Activated CD4-positive, alpha-beta T cell treated with anti-CD3 and anti-CD28 coated beads for 36 hours (primary cell): ENCODE measurements at regions of chr19 and their contacts with region 1.

Region 1: DNA sequence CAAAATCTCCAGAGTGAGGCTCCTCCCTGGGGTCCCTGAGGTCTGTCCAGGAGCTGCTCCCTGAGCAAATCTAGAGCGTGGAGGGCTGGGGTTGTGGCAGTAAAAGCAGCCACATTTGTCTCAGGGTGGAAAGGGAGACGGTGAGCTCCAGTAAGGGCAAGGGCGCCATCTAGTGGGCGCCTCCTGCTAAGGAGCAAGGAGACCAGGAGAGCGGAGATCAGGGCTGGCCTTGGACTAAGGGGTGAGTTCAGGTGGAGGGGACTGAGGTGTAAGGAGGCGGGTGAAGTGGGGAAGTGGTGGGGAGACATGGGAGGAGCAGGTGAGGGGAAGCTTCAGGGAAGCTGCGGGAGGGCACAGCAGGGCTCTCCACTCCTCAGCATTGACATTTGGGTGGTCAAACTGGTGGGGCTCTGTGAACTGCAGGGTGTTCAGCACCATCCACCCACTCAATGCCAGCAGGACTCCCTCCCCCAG is 5.3 kb upstream of the CEACAM21 start:
- DNase-seq: peak; percentile 92
- ATAC-seq: peak; percentile 97
- H3K4me3 Mint-ChIP-seq: no peak overlapping the region
- H3K27ac Mint-ChIP-seq: no peak overlapping the region
- H3K4me1 Mint-ChIP-seq: peaks cover 28% of the 10 kb centered on the region
- H3K27me3 Mint-ChIP-seq: no peaks in the 10 kb centered on the region

Region 2: DNA sequence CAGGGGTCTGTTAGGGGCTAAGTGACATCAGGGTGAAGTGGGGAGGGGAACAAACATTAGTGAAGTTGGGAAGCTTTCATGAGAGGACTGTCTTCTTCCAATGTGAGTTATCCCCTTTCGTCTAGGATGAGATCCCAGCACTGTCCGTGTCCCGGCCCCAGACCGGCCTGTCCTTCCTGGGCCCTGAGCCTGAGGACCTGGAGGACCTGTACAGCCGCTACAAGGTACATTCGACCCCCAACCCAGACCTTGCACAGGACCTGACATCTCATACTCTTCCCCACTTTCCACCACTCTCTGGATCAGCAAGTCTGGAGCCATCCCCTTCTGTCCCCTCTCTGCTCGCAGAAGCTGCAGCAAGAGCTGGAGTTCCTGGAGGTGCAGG is 1598.7 kb before region 1 on chr19:
- CTCF ChIA-PET with region 1: no interaction called
- POLR2A ChIA-PET with region 1: no interaction called
- intact Hi-C with region 1: no loop called
- DNase-seq: no peak
- ATAC-seq: no peak
- H3K4me3 Mint-ChIP-seq: peak overlapping the region; percentile 89
- H3K27ac Mint-ChIP-seq: peak overlapping the region; percentile 96
- H3K4me1 Mint-ChIP-seq: peaks cover 47% of the 10 kb centered on the region
- H3K27me3 Mint-ChIP-seq: no peaks in the 10 kb centered on the region

Region 3: DNA sequence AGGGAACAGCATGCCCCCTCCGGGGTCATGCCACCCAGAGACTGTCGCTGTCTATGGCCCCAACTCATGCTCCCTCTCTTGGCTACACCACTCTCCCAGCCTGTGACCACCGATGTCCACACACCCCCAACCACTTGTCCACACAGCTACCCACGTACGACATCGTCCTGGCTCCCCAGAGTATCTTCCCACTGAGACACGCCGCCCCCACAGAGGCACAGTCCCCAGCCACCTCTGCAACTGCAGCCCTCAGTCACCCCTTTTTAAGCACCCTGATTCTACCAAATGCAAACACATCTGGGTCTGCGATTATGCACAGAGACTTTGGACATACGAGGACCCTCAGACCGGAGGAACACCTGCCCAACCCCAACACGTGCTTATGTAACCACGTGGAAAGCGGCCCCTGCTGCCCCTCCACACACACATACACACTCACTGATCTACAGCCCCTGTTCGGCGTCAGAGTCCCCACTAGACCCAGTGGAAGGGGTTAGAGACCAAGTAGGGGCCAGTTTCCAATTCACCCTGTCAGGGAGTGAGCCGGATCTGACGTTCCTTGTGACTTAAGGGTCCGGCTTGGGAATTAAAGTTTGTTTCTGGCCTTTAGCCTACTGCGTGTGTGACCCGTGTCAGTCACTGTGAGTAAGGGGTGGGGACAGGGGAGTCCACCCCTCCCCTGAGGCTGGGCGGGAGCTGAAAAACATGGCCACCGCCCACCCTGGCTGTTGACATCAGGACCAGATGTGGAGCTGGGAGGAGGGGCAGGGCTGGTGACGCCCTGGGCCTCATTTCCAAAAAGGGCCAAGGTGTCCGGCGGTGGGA is 363.5 kb before region 1 on chr19:
- CTCF ChIA-PET with region 1: interaction called, 3 read pairs
- POLR2A ChIA-PET with region 1: no interaction called
- intact Hi-C with region 1: loop called in 1 of 2 experiments (anchors 1 kb)
- DNase-seq: no peak
- ATAC-seq: no peak
- H3K4me3 Mint-ChIP-seq: no peak overlapping the region
- H3K27ac Mint-ChIP-seq: no peak overlapping the region
- H3K4me1 Mint-ChIP-seq: peaks cover 2% of the 10 kb centered on the region
- H3K27me3 Mint-ChIP-seq: no peaks in the 10 kb centered on the region

Region 4: GRCh38 chr19:41515015-41515652 is 55.5 kb before region 1 on chr19:
- CTCF ChIA-PET with region 1: interaction called, 4 read pairs
- POLR2A ChIA-PET with region 1: no interaction called
- intact Hi-C with region 1: loop called (anchors 1 kb)
- DNase-seq: no peak
- ATAC-seq: no peak
- H3K4me3 Mint-ChIP-seq: no peak overlapping the region
- H3K27ac Mint-ChIP-seq: no peak overlapping the region
- H3K4me1 Mint-ChIP-seq: peaks cover 5% of the 10 kb centered on the region
- H3K27me3 Mint-ChIP-seq: peaks cover 14% of the 10 kb centered on the region

Region 5: DNA sequence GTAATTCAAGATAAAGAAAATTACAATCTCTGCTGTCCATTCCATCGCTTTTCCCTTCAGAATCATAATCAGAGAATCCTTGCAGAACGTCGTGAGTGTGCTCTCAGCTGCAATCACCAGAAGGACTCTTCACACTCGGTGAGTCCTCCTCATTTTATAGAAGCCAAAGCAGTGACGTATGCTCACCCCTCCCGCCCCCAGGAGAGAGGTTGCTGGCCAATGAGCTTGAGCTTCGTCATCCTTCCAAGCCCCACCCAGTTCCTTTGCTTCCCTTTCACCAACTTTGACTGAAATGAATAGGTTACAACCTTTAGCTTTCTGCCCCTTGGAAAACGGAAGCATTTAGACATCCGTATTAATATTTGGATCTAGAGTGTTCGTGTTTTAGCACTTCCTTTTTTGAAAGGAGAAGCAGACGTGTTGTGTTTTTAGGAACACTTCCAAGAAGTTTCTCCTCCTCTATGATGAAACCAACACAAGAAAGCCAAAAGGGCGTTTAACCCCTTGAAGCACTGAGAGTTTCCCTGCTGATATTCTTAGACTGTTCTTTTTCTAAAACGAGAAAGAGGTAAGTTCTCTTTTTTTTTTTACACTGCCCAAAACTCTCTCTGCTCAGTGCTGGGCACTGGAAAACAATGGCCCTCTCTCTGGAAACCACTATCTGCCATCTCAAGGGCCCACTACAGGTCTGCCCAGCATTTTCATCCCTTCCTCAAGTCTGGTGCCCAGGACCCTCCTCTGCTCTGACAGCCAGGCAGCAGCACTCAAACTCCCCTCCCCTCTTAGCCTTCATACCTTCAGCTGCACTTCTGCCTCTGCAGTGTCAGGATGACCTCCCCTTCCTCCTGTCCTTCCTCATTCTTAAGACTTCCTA is 39.0 kb before region 1 on chr19:
- CTCF ChIA-PET with region 1: interaction called, 450 read pairs
- POLR2A ChIA-PET with region 1: no interaction called
- intact Hi-C with region 1: no loop called
- DNase-seq: peak; percentile 91
- ATAC-seq: peak; percentile 85
- H3K4me3 Mint-ChIP-seq: peak overlapping the region; percentile 76
- H3K27ac Mint-ChIP-seq: peak overlapping the region; percentile 65
- H3K4me1 Mint-ChIP-seq: peaks cover 60% of the 10 kb centered on the region
- H3K27me3 Mint-ChIP-seq: no peaks in the 10 kb centered on the region

Region 6: DNA sequence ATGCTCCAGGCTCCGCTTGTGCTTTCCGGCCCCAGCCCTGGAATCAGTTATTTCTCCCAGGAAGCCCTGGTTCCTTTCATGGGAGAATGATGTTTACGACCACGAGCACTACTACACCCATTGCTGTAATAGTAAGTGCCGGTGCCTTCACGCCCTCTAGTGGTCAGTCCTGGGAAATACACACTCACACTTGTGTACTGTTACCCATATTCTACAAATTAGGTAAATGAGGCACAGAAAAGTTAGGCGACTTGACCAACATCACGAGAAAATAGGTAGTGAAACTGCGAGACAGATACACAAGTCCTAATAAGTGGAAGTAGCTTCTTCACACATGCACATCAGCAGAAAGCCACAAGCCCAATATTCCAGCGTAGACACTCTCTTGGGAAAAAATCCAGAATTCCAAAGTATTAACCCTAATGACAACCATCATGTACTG is 26.9 kb after region 1 on chr19:
- CTCF ChIA-PET with region 1: interaction called, 62 read pairs
- POLR2A ChIA-PET with region 1: no interaction called
- intact Hi-C with region 1: loop called (anchors 1 to 2 kb)
- DNase-seq: peak; percentile 83
- ATAC-seq: peak; percentile 83
- H3K4me3 Mint-ChIP-seq: peak overlapping the region; percentile 4
- H3K27ac Mint-ChIP-seq: no peak overlapping the region
- H3K4me1 Mint-ChIP-seq: peaks cover 12% of the 10 kb centered on the region
- H3K27me3 Mint-ChIP-seq: peaks cover 5% of the 10 kb centered on the region

Region 7: DNA sequence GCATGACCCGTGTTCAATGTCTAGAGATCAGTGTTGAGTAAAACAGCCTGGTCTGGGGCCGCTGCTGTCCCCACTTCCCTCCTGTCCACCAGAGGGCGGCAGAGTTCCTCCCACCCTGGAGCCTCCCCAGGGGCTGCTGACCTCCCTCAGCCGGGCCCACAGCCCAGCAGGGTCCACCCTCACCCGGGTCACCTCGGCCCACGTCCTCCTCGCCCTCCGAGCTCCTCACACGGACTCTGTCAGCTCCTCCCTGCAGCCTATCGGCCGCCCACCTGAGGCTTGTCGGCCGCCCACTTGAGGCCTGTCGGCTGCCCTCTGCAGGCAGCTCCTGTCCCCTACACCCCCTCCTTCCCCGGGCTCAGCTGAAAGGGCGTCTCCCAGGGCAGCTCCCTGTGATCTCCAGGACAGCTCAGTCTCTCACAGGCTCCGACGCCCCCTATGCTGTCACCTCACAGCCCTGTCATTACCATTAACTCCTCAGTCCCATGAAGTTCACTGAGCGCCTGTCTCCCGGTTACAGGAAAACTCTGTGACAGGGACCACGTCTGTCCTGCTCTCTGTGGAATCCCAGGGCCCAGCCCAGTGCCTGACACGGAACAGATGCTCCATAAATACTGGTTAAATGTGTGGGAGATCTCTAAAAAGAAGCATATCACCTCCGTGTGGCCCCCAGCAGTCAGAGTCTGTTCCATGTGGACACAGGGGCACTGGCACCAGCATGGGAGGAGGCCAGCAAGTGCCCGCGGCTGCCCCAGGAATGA is 136.2 kb after region 1 on chr19:
- CTCF ChIA-PET with region 1: no interaction called
- POLR2A ChIA-PET with region 1: no interaction called
- intact Hi-C with region 1: no loop called
- DNase-seq: peak; percentile 84
- ATAC-seq: peak; percentile 96
- H3K4me3 Mint-ChIP-seq: peak overlapping the region; percentile 28
- H3K27ac Mint-ChIP-seq: no peak overlapping the region
- H3K4me1 Mint-ChIP-seq: peaks cover 3% of the 10 kb centered on the region
- H3K27me3 Mint-ChIP-seq: peaks cover 26% of the 10 kb centered on the region